Activated T-helper 1 cell treated with anti-CD3 and anti-CD28 coated beads, Interleukin-12 subunit alpha, Interleukin-12 subunit beta, Interleukin-2, Interleukin-4 antibody, amounts not matched to agents 30 ng/mL and 10 ng/mL and 1 ng/mL, durations not matched to agents 14 hours and 24 hours and 36 hours (primary cell): ENCODE measurements at regions of chr14 and their contacts with region 1.

Region 1: GRCh38 chr14:71320107-71320733 is 413.0 kb downstream of the PCNX1 start:
- DNase-seq: peak; percentile 98
- H3K4me3 Mint-ChIP-seq: peak within 1 kb of the TSS; percentile 94
- H3K27ac Mint-ChIP-seq: peak within 1 kb of the TSS; percentile 97
- H3K4me1 Mint-ChIP-seq: peaks cover 54% of the 10 kb centered on the region
- H3K27me3 Mint-ChIP-seq: peaks cover 2% of the 10 kb centered on the region

Region 2: DNA sequence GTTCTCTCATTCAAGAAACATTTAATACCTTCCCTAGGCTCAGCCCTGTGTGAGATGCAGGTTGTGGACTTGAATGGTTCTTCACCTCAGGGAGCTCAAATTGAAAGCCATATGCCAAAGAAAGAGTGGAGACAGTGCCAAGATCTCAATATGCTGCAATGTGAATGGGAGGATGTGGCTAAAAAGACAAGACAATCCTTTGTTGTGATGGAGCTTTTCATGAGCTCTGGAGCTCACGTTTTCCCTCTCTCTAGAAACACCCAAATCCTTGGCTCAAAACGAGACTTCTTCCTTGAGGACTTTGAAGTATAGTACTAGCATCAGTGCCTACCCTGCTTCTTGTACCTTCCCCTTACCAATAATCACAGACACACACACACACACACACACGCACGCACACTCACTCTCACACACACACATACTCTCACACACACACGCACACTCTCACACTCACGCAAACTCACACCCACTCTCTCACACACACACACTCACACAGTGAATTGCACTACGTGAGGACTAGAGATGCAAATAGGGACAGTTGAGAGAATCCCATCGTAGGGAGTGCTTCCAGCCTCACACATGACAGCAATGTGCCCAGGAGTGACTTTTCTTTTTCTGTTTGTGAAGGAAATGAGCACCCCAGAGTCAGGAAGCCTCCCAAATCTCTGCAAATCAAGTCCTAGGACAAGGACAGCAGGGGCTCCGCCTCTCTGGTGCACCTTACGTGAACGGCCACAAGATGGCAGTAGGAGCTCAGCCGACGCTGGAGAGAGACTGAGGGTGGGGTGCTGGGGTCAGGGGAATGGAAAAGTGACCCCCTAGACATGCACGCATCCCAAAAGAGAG is 181.5 kb before region 1 on chr14:
- intact Hi-C with region 1: loop called (anchors 1 kb)
- DNase-seq: peak; percentile 34
- H3K4me3 Mint-ChIP-seq: no peak overlapping the region
- H3K27ac Mint-ChIP-seq: peak overlapping the region; percentile 21
- H3K4me1 Mint-ChIP-seq: peaks cover 40% of the 10 kb centered on the region
- H3K27me3 Mint-ChIP-seq: peaks cover 2% of the 10 kb centered on the region

Region 3: DNA sequence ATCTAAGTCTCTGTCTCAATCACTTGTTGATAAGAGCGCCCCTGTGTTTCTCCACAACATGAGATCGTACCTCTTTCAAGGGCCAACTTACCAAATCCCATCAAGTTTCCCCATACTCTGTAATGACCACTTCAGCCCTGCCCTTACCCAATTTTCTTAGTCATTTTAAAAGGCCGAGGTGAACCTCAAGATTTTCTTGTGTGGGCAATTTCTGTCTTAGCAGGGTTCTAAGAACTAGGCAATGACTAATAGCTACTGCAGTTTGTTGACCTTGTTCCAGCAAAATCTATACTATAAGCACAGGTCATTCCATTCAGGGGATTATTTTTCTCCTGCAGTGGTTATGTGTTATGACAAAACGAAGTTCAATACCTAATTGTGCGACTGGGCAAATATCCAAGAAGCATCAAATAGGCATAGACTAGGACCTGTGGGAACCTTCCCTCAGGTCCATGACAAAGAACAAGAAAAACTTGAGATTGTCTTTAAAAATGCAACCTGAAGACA is 53.2 kb before region 1 on chr14:
- intact Hi-C with region 1: loop called (anchors 1 kb)
- DNase-seq: no peak
- H3K4me3 Mint-ChIP-seq: peak overlapping the region; percentile 60
- H3K27ac Mint-ChIP-seq: peak overlapping the region; percentile 80
- H3K4me1 Mint-ChIP-seq: peaks cover 52% of the 10 kb centered on the region
- H3K27me3 Mint-ChIP-seq: no peaks in the 10 kb centered on the region

Region 4: GRCh38 chr14:71403656-71404055 is 83.4 kb after region 1 on chr14:
- intact Hi-C with region 1: loop called (anchors 1 kb)
- DNase-seq: peak; percentile 15
- H3K4me3 Mint-ChIP-seq: no peak overlapping the region
- H3K27ac Mint-ChIP-seq: peak overlapping the region; percentile 67
- H3K4me1 Mint-ChIP-seq: peaks cover 56% of the 10 kb centered on the region
- H3K27me3 Mint-ChIP-seq: no peaks in the 10 kb centered on the region

Region 5: GRCh38 chr14:71478542-71478941 is 158.3 kb after region 1 on chr14:
- intact Hi-C with region 1: loop called (anchors 5 kb)
- DNase-seq: no peak
- H3K4me3 Mint-ChIP-seq: peak overlapping the region; percentile 63
- H3K27ac Mint-ChIP-seq: peak overlapping the region; percentile 87
- H3K4me1 Mint-ChIP-seq: peaks cover 55% of the 10 kb centered on the region
- H3K27me3 Mint-ChIP-seq: no peaks in the 10 kb centered on the region

Region 6: GRCh38 chr14:71753126-71753830 is 433.1 kb after region 1 on chr14:
- intact Hi-C with region 1: loop called (anchors 1 kb)
- DNase-seq: peak; percentile 34
- H3K4me3 Mint-ChIP-seq: peak overlapping the region; percentile 19
- H3K27ac Mint-ChIP-seq: no peak overlapping the region
- H3K4me1 Mint-ChIP-seq: peaks cover 18% of the 10 kb centered on the region
- H3K27me3 Mint-ChIP-seq: peaks cover 12% of the 10 kb centered on the region